GM12878 (cell line): ENCODE measurements at regions of chr9 and their contacts with region 1.

Region 1: DNA sequence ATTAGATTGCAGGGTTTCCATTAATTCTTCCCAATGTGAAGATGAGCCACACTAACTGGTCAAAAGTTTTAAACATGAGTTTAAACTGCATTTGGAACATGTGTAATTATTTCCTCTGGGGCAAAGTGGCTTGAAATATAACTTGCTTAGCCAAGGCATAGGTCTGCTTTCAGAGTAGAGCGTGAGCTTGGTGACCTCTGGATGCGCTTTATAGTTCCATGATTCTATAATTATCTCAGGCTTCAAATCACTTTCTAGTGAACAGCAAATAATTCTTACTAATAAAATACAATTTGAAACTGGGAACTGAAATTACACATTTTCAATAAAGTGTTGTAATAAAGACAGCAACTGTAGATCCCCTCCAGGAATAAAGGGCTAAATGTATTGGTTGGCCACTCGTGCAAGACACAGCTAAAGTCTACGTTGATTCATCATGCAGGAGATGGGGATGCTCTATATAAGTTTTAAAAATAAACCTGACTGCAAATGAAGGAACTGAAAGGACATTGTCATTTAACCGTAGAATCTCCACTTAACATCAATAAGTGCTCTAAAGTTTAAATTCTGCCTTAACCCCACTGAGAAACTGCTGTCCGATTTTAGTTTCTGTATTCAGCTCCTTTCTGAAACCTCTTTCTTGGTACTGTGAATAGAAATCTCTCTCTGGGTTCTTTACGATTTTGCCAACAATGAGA is 460.0 kb downstream of the PSAT1 start:
- DNase-seq: peak; percentile 4
- ATAC-seq: peak; percentile 51
- H3K4me3 ChIP-seq: no peak overlapping the region
- H3K27ac ChIP-seq: no peak overlapping the region
- H3K4me1 ChIP-seq: no peaks in the 10 kb centered on the region
- H3K27me3 ChIP-seq: no peaks in the 10 kb centered on the region
- CTCF ChIP-seq: no peak
- EP300 ChIP-seq: no peak
- POLR2A ChIP-seq: no peak
- RAD21 ChIP-seq: no peak

Region 2: DNA sequence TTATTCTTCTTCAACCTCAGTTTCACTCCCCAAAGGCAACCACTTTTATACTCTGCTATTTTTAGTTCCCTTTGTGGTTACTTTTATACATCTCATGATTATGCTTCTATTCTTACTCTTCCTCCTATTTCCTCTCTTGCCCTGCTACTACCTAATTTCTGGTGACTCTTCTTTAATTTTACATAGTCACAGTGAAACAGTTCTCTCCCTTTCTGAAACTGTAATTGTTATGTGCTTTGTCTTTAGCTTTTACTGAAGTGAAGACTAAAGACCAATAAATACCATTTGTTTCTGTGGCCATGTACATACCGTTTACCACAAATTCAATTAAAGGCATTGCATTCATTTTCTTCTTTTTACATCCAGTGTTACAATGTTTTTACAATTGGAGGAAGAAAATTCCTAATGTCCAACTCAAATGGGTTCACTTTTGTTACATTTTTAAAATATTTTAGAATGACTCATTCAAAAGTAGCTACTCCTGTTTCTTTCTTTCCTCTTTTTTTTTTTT is 49.4 kb before region 1 on chr9:
- CTCF ChIA-PET with region 1: no interaction called
- POLR2A ChIA-PET with region 1: no interaction called
- RAD21 ChIA-PET with region 1: no interaction called
- SMC1A ChIA-PET with region 1: no interaction called
- in situ Hi-C with region 1: no loop called
- intact Hi-C with region 1: loop called (anchors 5 kb)
- DNase-seq: peak; percentile 8
- ATAC-seq: peak; percentile 69
- H3K4me3 ChIP-seq: no peak overlapping the region
- H3K27ac ChIP-seq: no peak overlapping the region
- H3K4me1 ChIP-seq: no peaks in the 10 kb centered on the region
- H3K27me3 ChIP-seq: no peaks in the 10 kb centered on the region; a peak in 1 of 4 replicates
- CTCF ChIP-seq: no peak
- EP300 ChIP-seq: no peak
- POLR2A ChIP-seq: no peak
- RAD21 ChIP-seq: no peak